Mammary epithelial cell (primary cell): ENCODE measurements at regions of chr5 and their contacts with region 1.

Region 1: DNA sequence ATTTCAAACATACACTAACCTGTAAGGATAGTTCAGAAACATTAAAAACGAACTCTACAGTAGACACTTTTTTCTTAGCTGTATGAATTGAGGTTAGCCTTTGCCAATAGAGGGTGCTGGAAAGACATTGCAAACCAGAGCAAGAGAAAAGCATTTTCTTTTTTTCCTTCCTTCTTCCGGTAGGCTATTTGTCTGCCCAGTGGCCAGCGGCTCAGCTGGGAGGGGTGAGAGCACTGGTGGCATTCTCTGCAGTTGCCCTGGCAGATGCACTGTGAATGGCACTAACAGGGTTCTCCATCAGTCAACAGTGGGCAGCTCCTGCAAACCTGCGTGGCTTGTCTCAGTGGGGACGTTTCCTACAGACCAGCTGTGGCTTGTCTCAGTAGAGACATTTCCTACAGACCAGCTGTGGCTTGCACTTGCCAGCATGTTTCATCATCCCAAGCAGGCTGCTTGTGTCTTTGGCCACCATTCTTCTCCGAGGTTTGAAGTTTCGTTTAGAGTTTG is 984.5 kb upstream of the CDH18 start:
- DNase-seq: peak; percentile 62
- H3K4me3 ChIP-seq: peak overlapping the region in 1 of 3 experiments; percentile 39
- H3K27ac ChIP-seq: no peak overlapping the region
- H3K4me1 ChIP-seq: no peaks in the 10 kb centered on the region
- H3K27me3 ChIP-seq: no peaks in the 10 kb centered on the region
- CTCF ChIP-seq: peak; percentile 16 to 62

Region 2: DNA sequence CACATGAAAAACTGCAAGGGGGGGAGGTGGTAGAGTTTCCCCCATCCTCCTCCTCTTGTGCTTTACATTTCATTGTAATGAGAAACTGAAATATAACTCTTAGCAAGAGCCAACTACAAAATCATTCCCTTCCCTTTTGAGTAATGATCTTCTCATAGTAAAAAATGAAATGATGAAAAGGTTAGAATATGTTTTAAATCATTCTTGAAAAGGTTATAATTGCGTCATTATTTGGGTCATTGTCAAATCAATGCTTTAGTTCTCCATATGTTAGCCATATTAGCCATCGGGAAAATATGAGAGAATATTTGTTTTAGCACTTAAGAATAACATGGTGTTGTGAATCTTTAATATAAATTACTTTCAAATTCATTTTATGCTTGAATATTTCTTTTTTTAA is 200.6 kb after region 1 on chr5:
- CTCF ChIA-PET with region 1: interaction called, 4 read pairs
- dilution Hi-C with region 1: no loop called
- in situ Hi-C with region 1: no loop called
- intact Hi-C with region 1: loop called (anchors 10 kb)
- DNase-seq: no peak
- H3K4me3 ChIP-seq: no peak overlapping the region
- H3K27ac ChIP-seq: no peak overlapping the region
- H3K4me1 ChIP-seq: no peaks in the 10 kb centered on the region
- H3K27me3 ChIP-seq: no peaks in the 10 kb centered on the region
- CTCF ChIP-seq: no peak